ENCODE measurements at regions of chr1 and their contacts with region 1.

Region 1: DNA sequence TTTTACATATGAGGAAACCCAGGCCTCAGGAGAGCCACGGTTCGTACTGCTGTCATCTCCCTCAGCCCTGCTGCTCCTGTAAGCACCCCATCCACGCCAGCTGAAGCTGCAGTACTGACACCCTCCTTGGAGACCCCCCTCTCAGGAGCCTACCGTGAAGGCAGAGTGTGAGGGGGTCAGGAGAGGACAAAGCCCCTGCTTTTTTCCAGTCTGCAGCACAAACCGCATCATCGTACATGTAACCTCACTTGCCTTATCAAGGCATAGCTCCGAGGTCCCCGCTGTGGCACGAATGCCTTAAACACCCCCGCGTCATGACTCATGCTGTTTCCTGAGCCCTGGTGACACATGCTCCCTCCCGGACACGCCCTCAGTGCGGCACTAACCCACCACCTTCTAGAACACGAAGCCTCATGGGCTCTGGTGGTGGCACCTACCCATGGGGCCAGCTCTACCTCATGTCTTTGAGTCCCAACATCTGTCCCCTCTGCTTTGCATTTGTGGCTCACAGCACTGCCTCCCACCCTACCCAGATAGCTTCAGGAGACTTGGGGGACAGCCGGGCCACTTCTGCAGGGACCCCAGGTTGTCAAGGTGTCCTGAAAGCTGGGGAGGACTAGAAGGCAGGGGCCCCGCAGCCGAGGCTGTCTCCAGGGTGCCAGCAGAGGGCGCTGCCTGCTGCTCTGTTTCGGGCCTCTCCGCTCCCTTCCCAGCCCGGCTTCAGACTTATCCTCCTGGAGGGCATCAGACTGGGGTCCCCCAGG is 4.9 kb downstream of the SH3BGRL3 start:
- DNase-seq: peak; percentile 87
- ATAC-seq: peak; percentile 47
- H3K4me3 ChIP-seq: peak overlapping the region in 2 of 5 experiments; percentile 5 to 19
- H3K4me3 Mint-ChIP-seq: peak overlapping the region; percentile 87
- H3K27ac ChIP-seq: peak overlapping the region; percentile 93 to 96
- H3K27ac Mint-ChIP-seq: peak overlapping the region; percentile 97
- H3K4me1 ChIP-seq: peaks cover 79 to 89% of the 10 kb centered on the region in 2 donors
- H3K4me1 Mint-ChIP-seq: peaks cover 88% of the 10 kb centered on the region
- H3K27me3 ChIP-seq: no peaks in the 10 kb centered on the region
- H3K27me3 Mint-ChIP-seq: no peaks in the 10 kb centered on the region
- CTCF ChIP-seq: peak; percentile 77

Region 2: DNA sequence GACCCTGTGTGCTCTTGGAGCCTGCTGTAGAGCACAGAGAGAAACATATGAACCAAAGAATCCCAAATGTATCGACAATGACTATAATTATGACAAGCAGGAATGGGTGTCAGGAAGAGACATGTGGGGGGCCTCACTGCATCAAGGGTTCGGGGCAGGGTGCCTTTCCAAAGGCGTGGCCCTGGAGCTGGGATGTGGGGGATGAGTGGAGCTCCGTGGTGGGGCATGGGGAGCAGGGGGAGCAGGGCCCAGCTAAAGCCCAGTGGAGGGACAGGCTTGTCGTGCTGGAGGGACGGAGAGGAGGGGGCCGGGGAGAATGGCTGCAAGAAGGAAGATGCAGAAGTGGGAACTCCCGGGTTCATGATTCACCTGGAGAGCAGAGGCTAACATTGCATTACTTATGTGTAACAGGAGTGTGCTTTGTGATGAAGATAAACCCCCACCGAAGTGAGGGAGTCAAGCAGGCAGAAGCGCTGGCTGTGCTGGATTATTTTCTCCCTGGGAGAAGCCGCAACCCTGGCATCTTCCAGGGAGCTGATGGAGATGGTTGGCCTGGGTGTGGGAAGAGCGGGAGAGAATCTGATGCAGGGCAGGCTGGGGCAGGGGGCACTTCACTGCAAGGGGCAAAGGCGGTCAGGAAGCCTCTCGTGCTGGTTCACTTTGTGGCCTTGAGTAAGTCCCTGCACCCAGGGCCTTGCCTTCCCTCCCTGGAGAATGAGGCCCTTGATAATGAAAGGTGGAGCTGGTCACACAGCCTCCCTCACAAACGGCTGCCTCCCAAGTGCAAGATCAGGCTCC is 1230.1 kb before region 1 on chr1:
- CTCF ChIA-PET with region 1: no interaction called
- POLR2A ChIA-PET with region 1: no interaction called
- intact Hi-C with region 1: no loop called
- DNase-seq: no peak
- ATAC-seq: no peak
- H3K4me3 ChIP-seq: no peak overlapping the region
- H3K4me3 Mint-ChIP-seq: no peak overlapping the region
- H3K27ac ChIP-seq: no peak overlapping the region
- H3K27ac Mint-ChIP-seq: no peak overlapping the region
- H3K4me1 ChIP-seq: no peaks in the 10 kb centered on the region
- H3K4me1 Mint-ChIP-seq: no peaks in the 10 kb centered on the region
- H3K27me3 ChIP-seq: peaks cover 0 to 21% (median 5%) of the 10 kb centered on the region in 4 experiments
- H3K27me3 Mint-ChIP-seq: peaks cover 38% of the 10 kb centered on the region
- CTCF ChIP-seq: no peak

Region 3: DNA sequence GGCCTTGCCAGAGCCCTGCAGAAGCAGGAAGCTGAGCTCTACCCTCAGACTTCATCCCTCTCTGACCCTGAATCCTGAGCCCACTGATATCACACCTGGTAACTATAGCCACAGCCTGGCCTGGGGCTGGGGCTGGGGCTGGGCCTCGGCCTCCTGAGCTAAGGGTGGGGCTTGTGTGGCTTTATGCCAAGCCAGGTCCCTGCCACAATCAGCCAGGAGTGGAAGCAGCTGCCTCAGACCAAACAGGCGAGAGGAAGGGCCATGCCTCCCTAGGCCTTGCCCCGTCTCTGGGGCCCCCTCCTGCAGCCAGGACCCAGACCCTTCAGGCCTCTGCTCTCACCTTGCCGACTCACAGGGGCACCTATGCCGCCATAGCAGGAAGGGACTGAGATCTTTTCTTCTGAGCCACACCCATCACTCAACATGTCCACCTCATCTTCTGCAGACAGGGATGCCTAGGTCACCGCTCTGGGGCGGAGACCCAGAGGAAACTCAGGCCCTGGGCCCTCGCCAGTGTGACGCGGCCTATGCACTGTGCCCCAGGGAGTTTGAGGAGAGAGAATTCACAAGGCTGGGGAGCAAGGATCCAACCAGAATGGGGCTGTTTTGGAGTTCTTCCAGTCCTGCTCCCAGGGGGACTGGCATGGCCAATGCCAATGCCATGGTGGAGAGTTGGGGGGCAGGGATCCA is 16.0 kb after region 1 on chr1:
- CTCF ChIA-PET with region 1: interaction called, 1,400 read pairs
- POLR2A ChIA-PET with region 1: interaction called, 12 read pairs
- intact Hi-C with region 1: no loop called
- DNase-seq: no peak
- ATAC-seq: no peak
- H3K4me3 ChIP-seq: no peak overlapping the region
- H3K4me3 Mint-ChIP-seq: no peak overlapping the region
- H3K27ac ChIP-seq: no peak overlapping the region
- H3K27ac Mint-ChIP-seq: peak overlapping the region; percentile 72
- H3K4me1 ChIP-seq: peaks cover 22 to 30% of the 10 kb centered on the region in 2 donors
- H3K4me1 Mint-ChIP-seq: peaks cover 34% of the 10 kb centered on the region
- H3K27me3 ChIP-seq: no peaks in the 10 kb centered on the region
- H3K27me3 Mint-ChIP-seq: no peaks in the 10 kb centered on the region
- CTCF ChIP-seq: no peak

Region 4: DNA sequence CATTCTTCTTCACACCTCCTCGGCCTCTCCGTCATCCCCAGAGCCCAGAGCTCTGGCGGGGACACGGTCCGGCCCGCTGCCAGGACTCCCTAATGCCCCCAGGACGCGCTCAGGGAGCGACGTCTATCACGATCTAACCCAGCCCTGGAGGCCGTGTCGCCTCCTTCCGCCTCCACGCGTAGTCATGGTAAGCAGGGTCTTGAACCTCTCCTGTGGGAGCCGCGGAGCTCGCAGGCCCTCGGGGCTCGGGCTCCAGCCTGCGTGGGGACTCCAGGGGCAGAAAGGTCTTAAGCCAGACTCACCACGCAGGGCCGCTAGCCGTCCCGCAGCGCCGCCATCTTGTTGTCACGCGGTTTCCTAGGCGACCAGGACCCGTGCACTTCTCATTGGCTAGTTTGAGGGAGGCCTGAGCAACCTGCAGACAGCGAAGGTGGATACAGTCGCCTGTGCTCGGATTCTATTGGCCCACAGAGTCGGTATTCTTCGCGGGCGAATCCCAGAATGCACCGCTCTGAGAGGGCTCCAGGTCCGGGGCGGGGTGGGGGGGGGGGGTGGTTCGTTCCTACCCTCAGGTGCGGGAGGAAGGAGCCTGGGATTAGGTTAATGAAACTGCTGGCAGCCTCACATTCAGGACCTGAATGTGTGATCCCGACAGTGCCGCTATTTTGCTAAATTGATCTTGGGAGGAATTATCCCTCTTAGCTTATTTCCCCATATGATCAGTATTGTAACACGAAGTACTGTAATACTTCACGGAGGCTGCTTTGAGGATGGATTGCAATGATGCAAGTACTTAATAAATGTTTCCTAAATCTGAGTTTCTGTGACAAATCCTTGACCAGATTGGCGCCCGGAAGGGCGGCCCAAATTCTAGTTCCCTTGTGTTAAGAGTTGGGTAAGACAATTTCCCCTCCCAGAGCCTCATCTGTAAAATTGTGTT is 21.8 kb after region 1 on chr1 and contains the start of gene UBXN11:
- CTCF ChIA-PET with region 1: interaction called, 1,400 read pairs
- POLR2A ChIA-PET with region 1: interaction called, 1,239 read pairs
- intact Hi-C with region 1: loop called (anchors 1 kb)
- DNase-seq: peak; percentile 94
- ATAC-seq: peak; percentile 100
- H3K4me3 ChIP-seq: peak within 1 kb of the TSS; percentile 60 to 99 (median 74)
- H3K4me3 Mint-ChIP-seq: peak within 1 kb of the TSS; percentile 95
- H3K27ac ChIP-seq: peak within 1 kb of the TSS; percentile 52 to 87
- H3K27ac Mint-ChIP-seq: peak within 1 kb of the TSS; percentile 93
- H3K4me1 ChIP-seq: peaks cover 17 to 29% of the 10 kb centered on the region in 2 donors
- H3K4me1 Mint-ChIP-seq: peaks cover 27% of the 10 kb centered on the region
- H3K27me3 ChIP-seq: no peaks in the 10 kb centered on the region
- H3K27me3 Mint-ChIP-seq: no peaks in the 10 kb centered on the region
- CTCF ChIP-seq: no peak
- total RNA-seq, gene UBXN11: 81.4 and 83.8 TPM in 2 replicates

Measured in B cell (primary cell).